ENCODE measurements at regions of chrX and their contacts with region 1.

Region 1: GRCh38 chrX:54639346-54640102 is 109.5 kb downstream of the GNL3L start:
- DNase-seq: peak; percentile 96
- ATAC-seq: peak; percentile 93
- H3K4me3 Mint-ChIP-seq: peak overlapping the region; percentile 84
- H3K27ac Mint-ChIP-seq: peak overlapping the region; percentile 92
- H3K4me1 Mint-ChIP-seq: peaks cover 6% of the 10 kb centered on the region
- H3K27me3 Mint-ChIP-seq: no peaks in the 10 kb centered on the region

Region 2: GRCh38 chrX:54357414-54358377 is 281.8 kb before region 1 on chrX and contains the start of gene WNK3:
- CTCF ChIA-PET with region 1: interaction called, 3 read pairs
- POLR2A ChIA-PET with region 1: no interaction called
- intact Hi-C with region 1: loop called in 1 of 2 experiments (anchors 2 kb)
- DNase-seq: peak; percentile 72
- ATAC-seq: peak; percentile 71
- H3K4me3 Mint-ChIP-seq: peak within 1 kb of the TSS; percentile 77
- H3K27ac Mint-ChIP-seq: peak within 1 kb of the TSS; percentile 65
- H3K4me1 Mint-ChIP-seq: peaks cover 17% of the 10 kb centered on the region
- H3K27me3 Mint-ChIP-seq: peaks cover 23% of the 10 kb centered on the region
- total RNA-seq, gene WNK3: 0.74 to 1.1 TPM

Region 3: GRCh38 chrX:54529552-54530357 is 109.8 kb before region 1 on chrX and contains the start of gene GNL3L:
- CTCF ChIA-PET with region 1: no interaction called
- POLR2A ChIA-PET with region 1: no interaction called
- intact Hi-C with region 1: loop called (anchors 1 kb)
- DNase-seq: peak; percentile 89
- ATAC-seq: peak; percentile 88
- H3K4me3 Mint-ChIP-seq: peak within 1 kb of the TSS; percentile 90
- H3K27ac Mint-ChIP-seq: peak within 1 kb of the TSS; percentile 90
- H3K4me1 Mint-ChIP-seq: peaks cover 26% of the 10 kb centered on the region
- H3K27me3 Mint-ChIP-seq: no peaks in the 10 kb centered on the region
- total RNA-seq, gene GNL3L: 62.5 to 62.8 TPM

Region 4: GRCh38 chrX:54708404-54708803 is 68.9 kb after region 1 on chrX:
- CTCF ChIA-PET with region 1: no interaction called
- POLR2A ChIA-PET with region 1: no interaction called
- intact Hi-C with region 1: no loop called
- DNase-seq: no peak
- ATAC-seq: no peak
- H3K4me3 Mint-ChIP-seq: no peak overlapping the region
- H3K27ac Mint-ChIP-seq: no peak overlapping the region
- H3K4me1 Mint-ChIP-seq: no peaks in the 10 kb centered on the region
- H3K27me3 Mint-ChIP-seq: peaks cover 4% of the 10 kb centered on the region

Region 5: DNA sequence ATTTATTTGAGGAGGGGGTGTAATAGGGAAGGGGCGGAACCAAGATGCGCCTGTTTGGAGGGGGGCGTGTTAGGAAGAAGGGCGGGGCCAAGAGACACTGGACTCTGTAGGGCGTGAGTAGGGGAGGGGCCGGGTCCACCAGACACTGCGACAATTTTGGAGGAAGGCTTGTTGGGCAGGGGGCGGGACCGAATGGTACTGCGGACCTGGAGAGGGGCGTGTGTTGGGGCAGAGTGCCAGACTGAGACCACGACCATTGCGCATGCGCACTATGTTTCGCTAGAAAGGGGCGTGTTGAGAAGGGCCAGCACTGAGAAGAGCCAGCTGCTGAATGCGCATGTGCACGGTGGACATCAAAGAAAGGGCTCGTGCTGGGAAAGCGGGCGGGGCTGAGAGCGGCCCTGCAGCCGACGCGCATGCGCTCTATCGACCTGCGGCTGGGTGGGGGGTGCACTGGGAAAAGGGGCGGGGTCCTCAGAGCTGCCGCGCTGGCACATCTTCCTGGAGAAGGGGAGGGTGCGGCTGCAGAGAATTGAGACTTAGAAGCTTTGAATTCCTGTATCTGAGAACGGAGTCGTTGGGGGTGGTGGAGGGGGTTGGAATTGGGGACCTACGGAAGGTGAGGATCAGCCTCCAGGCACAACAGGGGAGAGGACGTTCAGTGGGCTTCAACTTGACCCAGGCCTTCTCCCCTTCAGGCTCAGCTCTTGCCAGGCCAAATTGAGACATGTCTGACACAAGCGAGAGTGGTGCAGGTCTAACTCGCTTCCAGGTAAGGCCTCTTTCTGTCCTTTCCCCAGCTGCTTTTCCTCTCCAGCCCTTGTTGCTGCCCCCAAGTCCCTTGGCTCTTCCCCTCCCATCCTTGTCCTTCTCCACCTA is 169.3 kb after region 1 on chrX:
- CTCF ChIA-PET with region 1: interaction called, 3 read pairs
- POLR2A ChIA-PET with region 1: interaction called, 7 read pairs
- intact Hi-C with region 1: loop called (anchors 1 kb)
- DNase-seq: peak; percentile 93
- ATAC-seq: peak; percentile 92
- H3K4me3 Mint-ChIP-seq: peak overlapping the region; percentile 87
- H3K27ac Mint-ChIP-seq: peak overlapping the region; percentile 89
- H3K4me1 Mint-ChIP-seq: peaks cover 16% of the 10 kb centered on the region
- H3K27me3 Mint-ChIP-seq: no peaks in the 10 kb centered on the region

Region 6: GRCh38 chrX:55057675-55058249 is 418.2 kb after region 1 on chrX:
- CTCF ChIA-PET with region 1: no interaction called
- POLR2A ChIA-PET with region 1: no interaction called
- intact Hi-C with region 1: loop called in 1 of 2 experiments (anchors 5 kb)
- DNase-seq: peak; percentile 31
- ATAC-seq: peak; percentile 73
- H3K4me3 Mint-ChIP-seq: peak overlapping the region; percentile 46
- H3K27ac Mint-ChIP-seq: no peak overlapping the region
- H3K4me1 Mint-ChIP-seq: peaks cover 18% of the 10 kb centered on the region
- H3K27me3 Mint-ChIP-seq: no peaks in the 10 kb centered on the region

Measured in activated CD4-positive, alpha-beta T cell treated with anti-CD3 and anti-CD28 coated beads for 36 hours (primary cell).